ENCODE measurements at regions of chr1 and their contacts with region 1.

Region 1: DNA sequence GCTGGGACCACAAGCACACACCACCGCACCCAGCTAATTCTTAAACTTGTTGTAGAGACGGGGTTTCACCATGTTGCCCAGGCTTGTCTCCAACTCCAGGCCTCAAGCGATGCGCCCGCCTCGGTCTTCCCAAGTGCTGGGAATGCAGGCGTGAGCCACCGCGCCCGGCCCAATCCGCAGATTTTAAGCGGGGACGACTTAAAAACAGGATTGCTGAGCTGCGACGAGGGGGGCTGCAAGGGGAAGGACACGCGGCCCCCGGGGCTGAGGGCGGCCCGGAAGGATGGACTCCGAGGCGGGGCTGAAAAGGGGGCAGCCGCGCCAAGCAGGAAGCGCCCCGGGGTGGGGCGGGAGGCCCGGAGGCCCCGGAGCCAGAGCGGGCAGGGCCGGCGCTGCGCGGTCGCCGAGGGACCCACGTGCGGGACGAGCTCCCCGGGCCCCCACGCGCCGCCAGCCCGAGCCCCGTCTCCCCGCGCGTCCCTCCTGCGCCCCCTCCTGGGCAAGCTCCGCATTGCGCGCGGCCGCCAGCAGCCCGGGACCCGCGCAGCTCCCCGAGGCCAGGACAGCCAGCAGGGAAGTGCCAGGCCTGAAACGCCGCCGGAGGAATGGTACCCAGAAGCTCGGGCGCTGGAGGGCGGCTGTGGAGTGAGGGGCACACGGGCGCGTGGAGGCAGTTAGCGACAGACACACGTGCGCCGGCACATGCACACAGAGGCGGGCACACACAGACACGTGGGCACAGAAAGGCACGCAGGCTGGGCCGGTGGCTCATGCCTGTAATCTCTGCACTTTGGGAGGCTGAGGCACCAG is 5.5 kb upstream of the PRKCZ start:
- DNase-seq: no peak
- H3K4me3 ChIP-seq: peak overlapping the region; percentile 10; the same call in 1 of the 2 replicates
- H3K27me3 ChIP-seq: peaks cover 18% of the 10 kb centered on the region
- CTCF ChIP-seq: peak; percentile 53

Region 2: DNA sequence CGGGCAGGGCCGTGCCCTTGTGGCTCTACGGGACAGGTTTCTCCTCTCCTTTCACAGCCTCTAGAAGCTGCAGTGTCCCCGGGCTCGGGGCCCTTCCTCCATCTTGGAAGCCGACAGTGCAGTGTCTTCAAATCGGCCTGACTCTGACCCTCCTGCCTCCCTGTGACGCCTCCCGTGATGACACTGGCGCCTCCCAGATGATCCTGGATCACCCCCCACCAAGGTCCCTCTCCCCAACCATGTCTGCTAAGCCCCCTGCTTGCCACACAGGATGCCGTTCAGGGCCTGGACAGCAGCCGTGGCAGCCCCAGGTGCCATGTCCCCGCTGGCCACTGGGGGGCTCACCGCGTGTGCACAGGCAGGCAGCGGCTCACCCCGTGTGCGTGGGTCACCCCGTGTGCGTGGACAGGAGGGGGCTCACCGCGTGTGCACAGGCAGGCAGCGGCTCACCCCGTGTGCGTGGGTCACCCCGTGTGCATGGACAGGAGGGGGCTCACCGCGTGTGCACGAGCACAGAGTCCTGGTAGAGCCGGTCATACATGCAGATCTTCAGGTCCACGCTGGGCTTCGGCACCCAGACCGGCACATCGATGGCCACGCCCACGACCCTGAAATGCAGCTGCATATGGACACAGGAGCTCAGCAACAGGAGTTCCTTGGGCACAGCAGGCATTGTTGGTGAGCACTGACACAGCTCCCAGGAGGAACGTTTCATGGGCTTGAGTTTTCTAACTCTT is 100.7 kb before region 1 on chr1:
- CTCF ChIA-PET with region 1: interaction called, 50 read pairs
- POLR2A ChIA-PET with region 1: no interaction called
- DNase-seq: no peak
- H3K4me3 ChIP-seq: no peak overlapping the region
- H3K27me3 ChIP-seq: peaks cover 3% of the 10 kb centered on the region; the same call in 1 of the 2 replicates
- CTCF ChIP-seq: peak; percentile 88

Region 3: DNA sequence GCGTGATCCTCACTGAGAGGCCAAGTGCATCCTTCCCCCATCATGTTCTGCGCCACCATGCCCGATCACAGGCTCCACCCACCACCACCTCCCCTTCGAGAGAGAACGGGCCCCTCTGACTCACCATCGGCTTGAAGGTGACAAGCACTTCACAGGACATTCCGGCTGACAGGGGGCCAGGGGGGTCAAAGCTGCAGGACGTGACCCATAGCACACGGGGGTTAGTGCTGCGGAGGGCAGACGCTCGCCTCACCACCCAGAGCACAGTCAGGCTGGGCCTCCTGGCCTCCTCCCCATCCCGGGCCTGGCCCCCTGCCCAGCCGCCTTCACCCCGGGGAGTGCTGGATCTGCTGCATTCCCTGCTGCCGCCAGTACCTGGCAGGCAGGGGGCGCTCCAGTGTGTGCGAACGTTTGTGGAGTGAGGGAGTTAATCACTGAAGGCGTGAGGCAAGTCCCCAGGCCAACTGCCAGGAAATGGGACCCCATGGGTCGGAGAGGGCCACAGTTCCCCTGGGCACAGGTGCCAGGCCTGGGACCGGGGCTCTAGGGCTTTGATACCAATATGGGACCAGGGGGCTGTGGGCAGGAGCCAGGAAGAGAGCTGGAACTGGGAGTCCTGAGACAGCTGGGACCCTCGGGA is 84.8 kb before region 1 on chr1:
- CTCF ChIA-PET with region 1: interaction called, 50 read pairs
- POLR2A ChIA-PET with region 1: no interaction called
- DNase-seq: no peak
- H3K4me3 ChIP-seq: no peak overlapping the region
- H3K27me3 ChIP-seq: peaks cover 10% of the 10 kb centered on the region
- CTCF ChIP-seq: peak; percentile 80

Region 4: DNA sequence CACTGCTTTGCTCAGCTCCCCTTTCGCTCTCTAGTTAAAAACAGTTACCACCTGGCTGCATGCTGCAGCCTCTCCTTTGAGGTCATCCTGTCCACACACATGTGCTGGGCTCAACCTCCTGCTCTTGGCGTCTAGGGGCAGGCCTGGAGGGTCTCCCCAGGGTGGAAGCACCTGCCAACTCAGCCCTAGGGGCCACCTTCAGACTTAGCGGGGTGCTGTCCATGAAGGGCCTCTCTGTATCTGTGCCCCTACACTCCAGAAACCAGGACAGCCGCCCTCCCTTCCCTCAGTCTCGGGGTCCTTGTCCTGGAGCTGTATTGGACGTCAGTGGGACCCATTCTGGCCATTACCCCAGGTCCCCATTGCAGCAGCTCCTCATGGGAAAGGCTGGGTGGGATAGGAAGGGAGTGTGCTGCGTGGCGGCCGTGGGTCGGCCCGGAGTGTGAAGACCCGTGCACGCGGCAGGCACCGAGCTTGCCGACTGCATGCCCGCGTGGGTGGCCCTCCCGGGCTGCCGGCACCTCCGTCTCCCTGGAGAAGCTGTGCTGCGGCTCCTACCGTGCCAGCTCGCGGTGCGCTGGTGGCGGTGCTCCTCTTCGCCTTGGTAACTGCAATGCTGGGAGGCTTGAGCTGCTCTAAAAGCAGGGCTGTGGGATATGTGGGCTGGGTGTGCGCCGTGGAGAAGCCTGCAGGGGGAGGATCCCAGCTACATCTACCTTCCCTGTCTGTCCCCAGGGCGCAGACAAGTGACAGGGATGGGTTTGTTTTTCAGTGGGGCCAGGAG is 23.4 kb before region 1 on chr1:
- CTCF ChIA-PET with region 1: interaction called, 12 read pairs
- POLR2A ChIA-PET with region 1: no interaction called
- DNase-seq: no peak
- H3K4me3 ChIP-seq: no peak overlapping the region
- H3K27me3 ChIP-seq: peaks cover 27% of the 10 kb centered on the region
- CTCF ChIP-seq: no peak

Region 5: GRCh38 chr1:2031546-2032540 is 12.9 kb before region 1 on chr1:
- CTCF ChIA-PET with region 1: interaction called, 23 read pairs
- POLR2A ChIA-PET with region 1: no interaction called
- DNase-seq: no peak
- H3K4me3 ChIP-seq: no peak overlapping the region
- H3K27me3 ChIP-seq: peaks cover 4% of the 10 kb centered on the region
- CTCF ChIP-seq: no peak

Region 6: GRCh38 chr1:2055911-2056575 is 11.3 kb after region 1 on chr1:
- CTCF ChIA-PET with region 1: interaction called, 14 read pairs
- POLR2A ChIA-PET with region 1: no interaction called
- DNase-seq: no peak
- H3K4me3 ChIP-seq: no peak overlapping the region
- H3K27me3 ChIP-seq: peaks cover 8% of the 10 kb centered on the region
- CTCF ChIP-seq: no peak

Region 7: GRCh38 chr1:2494323-2494693 is 449.6 kb after region 1 on chr1:
- CTCF ChIA-PET with region 1: no interaction called
- POLR2A ChIA-PET with region 1: no interaction called
- DNase-seq: peak; percentile 71
- H3K4me3 ChIP-seq: no peak overlapping the region
- H3K27me3 ChIP-seq: peaks cover 15% of the 10 kb centered on the region
- CTCF ChIP-seq: no peak